Activated CD8-positive, alpha-beta T cell treated with anti-CD3 and anti-CD28 coated beads, Interleukin-2, amount 10 ng/mL, durations not matched to agents 7 days and 5 days (primary cell): ENCODE measurements at regions of chr14 and their contacts with region 1.

Region 1: DNA sequence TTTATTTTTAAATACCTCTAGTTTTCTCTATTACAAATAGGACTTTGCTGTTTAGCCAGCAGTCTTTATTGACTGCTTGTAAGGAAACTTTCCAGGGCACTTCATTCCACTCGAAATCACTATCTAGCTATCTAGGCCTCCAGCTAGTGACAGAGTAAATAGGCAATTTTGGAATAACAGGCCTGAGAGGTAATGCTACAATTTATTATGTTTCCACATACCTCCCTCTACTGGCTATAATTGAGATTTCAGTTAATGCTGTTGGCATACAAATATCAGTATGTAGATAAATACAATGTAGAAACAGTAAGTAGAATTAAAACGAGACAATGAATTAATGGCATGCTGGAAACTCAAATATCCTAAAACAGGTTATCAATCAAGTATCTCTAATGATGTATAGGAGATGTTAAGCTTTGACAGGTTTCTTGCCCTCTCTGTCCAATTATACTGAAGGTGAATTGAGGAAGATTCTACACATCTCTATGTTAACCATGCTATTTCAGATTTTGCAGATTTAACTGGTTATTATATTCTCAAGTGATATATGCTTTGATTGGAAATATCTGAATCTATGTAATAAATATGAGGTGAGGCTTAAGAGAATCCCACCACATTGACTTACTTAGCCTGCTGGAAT is 7.2 kb downstream of the DTD2 start:
- DNase-seq: no peak
- ATAC-seq: no peak
- H3K4me3 Mint-ChIP-seq: no peak overlapping the region
- H3K27ac Mint-ChIP-seq: no peak overlapping the region
- H3K4me1 Mint-ChIP-seq: peaks cover 4% of the 10 kb centered on the region
- H3K27me3 Mint-ChIP-seq: no peaks in the 10 kb centered on the region

Region 2: DNA sequence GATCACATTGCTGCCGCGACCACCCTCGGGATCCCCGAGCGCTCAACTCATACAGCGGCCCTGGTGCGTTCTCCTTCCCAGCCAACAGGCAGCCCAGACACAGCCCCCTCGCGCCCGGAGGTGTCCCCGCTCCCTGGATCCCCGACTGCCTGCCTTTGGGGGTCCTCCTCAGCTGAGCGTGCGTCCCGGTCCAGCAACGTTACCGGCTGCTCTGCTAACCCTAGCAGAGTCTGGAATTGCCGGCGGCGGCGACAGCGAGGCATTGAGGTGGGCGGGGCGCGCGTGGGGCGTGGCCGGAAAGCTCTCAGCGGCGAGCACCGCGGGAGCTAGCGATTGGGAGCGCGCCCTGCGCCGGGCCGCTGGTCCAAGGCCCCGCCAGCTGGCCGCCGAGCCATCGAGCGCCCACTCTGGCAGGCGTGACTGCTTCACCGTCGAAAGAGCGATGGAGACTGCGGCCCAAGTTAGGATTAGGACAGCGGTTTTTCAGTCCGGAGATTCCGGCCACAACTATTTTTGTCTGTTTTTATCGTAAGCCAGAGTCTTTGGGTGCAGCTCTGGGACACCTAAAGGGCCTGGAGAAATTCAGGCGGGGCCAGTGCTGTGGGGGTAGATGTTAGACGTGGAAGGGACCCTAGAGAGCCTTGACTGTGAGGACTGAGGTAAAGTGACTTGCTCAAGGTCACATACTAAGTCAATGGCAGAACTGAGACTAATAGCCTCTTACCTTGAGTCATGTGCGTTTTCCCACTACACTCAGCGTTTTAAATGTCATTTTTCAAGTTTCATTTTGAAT is 29.6 kb before region 1 on chr14 and contains the start of gene HEATR5A:
- CTCF ChIA-PET with region 1: interaction called, 15 read pairs
- POLR2A ChIA-PET with region 1: interaction called, 5 read pairs
- DNase-seq: peak; percentile 93
- ATAC-seq: peak; percentile 96
- H3K4me3 Mint-ChIP-seq: peak within 1 kb of the TSS; percentile 96
- H3K27ac Mint-ChIP-seq: peak within 1 kb of the TSS; percentile 86
- H3K4me1 Mint-ChIP-seq: peaks cover 19% of the 10 kb centered on the region
- H3K27me3 Mint-ChIP-seq: no peaks in the 10 kb centered on the region
- total RNA-seq, gene HEATR5A: 8.5 to 9.4 TPM

Region 3: GRCh38 chr14:31429791-31430190 is 20.3 kb before region 1 on chr14:
- CTCF ChIA-PET with region 1: interaction called, 10 read pairs
- POLR2A ChIA-PET with region 1: no interaction called
- DNase-seq: no peak
- ATAC-seq: no peak
- H3K4me3 Mint-ChIP-seq: no peak overlapping the region
- H3K27ac Mint-ChIP-seq: no peak overlapping the region
- H3K4me1 Mint-ChIP-seq: no peaks in the 10 kb centered on the region
- H3K27me3 Mint-ChIP-seq: no peaks in the 10 kb centered on the region

Region 4: GRCh38 chr14:31435276-31435675 is 14.8 kb before region 1 on chr14:
- CTCF ChIA-PET with region 1: interaction called, 10 read pairs
- POLR2A ChIA-PET with region 1: no interaction called
- DNase-seq: no peak
- ATAC-seq: no peak
- H3K4me3 Mint-ChIP-seq: no peak overlapping the region
- H3K27ac Mint-ChIP-seq: no peak overlapping the region
- H3K4me1 Mint-ChIP-seq: no peaks in the 10 kb centered on the region
- H3K27me3 Mint-ChIP-seq: no peaks in the 10 kb centered on the region